ENCODE measurements at regions of chr12 and their contacts with region 1.

Region 1: GRCh38 chr12:56224102-56224701 is at the start of gene NABP2:
- H3K4me3 ChIP-seq: peak within 1 kb of the TSS; percentile 77
- H3K27ac ChIP-seq: peak within 1 kb of the TSS; percentile 64
- H3K4me1 ChIP-seq: peaks cover 12% of the 10 kb centered on the region; the same call in 1 of the 2 replicates
- CTCF ChIP-seq: peak; percentile 98

Region 2: GRCh38 chr12:56104109-56104814 is 119.9 kb before region 1 on chr12 and contains the start of gene PA2G4:
- CTCF ChIA-PET with region 1: interaction called, 8 read pairs
- POLR2A ChIA-PET with region 1: interaction called, 16 read pairs
- H3K4me3 ChIP-seq: peak within 1 kb of the TSS; percentile 82
- H3K27ac ChIP-seq: peak within 1 kb of the TSS; percentile 90
- H3K4me1 ChIP-seq: 0 out of 2 replicates have a peak, but pooled peaks cover 2% of the 10 kb centered on the region
- CTCF ChIP-seq: no peak; the same call in 1 of the 2 replicates

Region 3: DNA sequence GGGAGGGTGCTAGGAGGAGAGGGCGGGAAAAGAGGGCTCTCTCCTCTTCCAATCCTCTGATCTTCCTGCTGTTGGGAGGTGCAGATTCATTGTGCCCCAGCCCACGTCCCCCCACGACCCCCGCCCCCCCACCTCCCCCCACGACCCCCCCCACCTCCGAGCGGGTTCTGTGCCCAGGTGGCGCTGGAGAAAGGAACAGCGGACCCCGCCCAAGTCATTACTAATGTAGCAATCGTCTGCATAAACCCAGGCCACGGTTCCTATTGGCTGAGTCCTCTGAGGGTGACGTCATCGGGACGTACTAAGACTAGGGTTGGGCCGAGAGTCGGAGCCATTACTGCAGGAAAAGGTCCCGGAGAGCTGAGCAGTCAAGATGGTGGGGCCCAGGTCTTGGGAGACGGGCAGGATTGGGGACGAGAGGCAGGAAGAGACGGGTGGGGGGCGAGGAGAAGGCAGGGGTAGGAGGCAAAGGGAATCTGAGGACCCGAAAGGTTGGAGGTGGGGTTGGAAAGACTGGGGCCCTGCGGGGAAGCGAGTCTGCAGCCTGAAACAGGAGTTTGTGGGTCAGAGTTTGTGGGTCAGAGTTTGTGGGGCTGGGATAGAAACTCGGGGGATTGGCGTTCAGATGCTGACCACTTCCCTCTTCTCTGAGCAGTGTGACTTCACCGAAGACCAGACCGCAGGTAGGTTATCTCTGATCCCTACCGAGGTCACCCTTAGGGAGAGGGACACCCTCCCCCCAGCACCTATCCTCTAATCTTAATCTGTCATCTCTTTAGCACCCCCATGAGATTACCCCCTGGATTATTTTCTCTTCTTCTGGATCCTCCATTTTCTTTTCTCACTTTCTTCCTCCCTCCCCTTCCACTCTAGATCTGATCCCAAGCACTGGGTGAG is 65.9 kb before region 1 on chr12 and contains the start of gene MYL6:
- CTCF ChIA-PET with region 1: no interaction called
- POLR2A ChIA-PET with region 1: interaction called, 12 read pairs
- H3K4me3 ChIP-seq: peak within 1 kb of the TSS; percentile 90
- H3K27ac ChIP-seq: peak within 1 kb of the TSS; percentile 92
- H3K4me1 ChIP-seq: peaks cover 3% of the 10 kb centered on the region; the same call in 1 of the 2 replicates
- CTCF ChIP-seq: peak; percentile 30

Region 4: GRCh38 chr12:56206457-56207166 is 17.6 kb before region 1 on chr12:
- CTCF ChIA-PET with region 1: interaction called, 73 read pairs
- POLR2A ChIA-PET with region 1: interaction called, 47 read pairs
- H3K4me3 ChIP-seq: no peak overlapping the region
- H3K27ac ChIP-seq: no peak overlapping the region
- H3K4me1 ChIP-seq: no peaks in the 10 kb centered on the region
- CTCF ChIP-seq: peak; percentile 49

Region 5: DNA sequence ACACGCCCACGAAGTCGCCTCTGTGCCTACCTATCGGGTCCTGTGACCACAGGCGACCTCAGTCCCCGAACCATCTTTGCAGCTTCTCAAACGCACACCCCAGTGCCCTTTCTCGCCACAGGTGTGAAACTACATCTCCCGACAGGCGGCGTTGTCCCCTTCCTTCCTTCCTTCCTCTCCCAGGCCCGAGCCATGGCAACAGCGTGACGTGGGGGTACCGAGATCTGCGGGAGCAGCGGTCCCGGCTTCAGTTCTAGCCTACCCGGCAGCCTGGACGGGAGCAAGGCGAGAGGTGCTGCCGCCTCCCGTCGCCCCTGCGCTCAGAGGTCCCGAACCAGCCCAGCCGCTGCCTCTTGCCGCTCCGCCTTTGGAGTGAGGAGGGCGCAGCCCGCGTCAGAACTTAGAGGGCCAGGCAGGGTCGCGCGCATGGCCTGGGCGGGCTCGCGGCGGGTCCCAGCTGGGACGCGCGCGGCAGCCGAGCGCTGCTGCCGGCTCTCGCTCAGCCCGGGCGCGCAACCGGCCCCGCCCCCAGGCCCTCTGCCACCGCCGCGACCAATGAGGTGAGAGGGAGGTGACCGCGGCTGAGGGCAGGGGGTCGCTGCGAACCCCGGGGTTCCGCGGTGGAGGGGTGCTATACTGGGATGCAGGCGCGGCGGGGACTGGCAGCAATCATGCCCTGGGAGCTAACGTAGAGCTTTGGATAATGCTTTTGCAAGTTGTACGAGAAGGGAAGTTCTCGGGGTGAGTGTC is 42.7 kb after region 1 on chr12 and contains the start of gene COQ10A:
- CTCF ChIA-PET with region 1: interaction called, 4 read pairs
- POLR2A ChIA-PET with region 1: interaction called, 18 read pairs
- H3K4me3 ChIP-seq: peak within 1 kb of the TSS; percentile 65
- H3K27ac ChIP-seq: peak within 1 kb of the TSS; percentile 62; the same call in 1 of the 2 replicates
- H3K4me1 ChIP-seq: no peaks in the 10 kb centered on the region; the same call in 1 of the 2 replicates
- CTCF ChIP-seq: peak; percentile 98

Region 6: DNA sequence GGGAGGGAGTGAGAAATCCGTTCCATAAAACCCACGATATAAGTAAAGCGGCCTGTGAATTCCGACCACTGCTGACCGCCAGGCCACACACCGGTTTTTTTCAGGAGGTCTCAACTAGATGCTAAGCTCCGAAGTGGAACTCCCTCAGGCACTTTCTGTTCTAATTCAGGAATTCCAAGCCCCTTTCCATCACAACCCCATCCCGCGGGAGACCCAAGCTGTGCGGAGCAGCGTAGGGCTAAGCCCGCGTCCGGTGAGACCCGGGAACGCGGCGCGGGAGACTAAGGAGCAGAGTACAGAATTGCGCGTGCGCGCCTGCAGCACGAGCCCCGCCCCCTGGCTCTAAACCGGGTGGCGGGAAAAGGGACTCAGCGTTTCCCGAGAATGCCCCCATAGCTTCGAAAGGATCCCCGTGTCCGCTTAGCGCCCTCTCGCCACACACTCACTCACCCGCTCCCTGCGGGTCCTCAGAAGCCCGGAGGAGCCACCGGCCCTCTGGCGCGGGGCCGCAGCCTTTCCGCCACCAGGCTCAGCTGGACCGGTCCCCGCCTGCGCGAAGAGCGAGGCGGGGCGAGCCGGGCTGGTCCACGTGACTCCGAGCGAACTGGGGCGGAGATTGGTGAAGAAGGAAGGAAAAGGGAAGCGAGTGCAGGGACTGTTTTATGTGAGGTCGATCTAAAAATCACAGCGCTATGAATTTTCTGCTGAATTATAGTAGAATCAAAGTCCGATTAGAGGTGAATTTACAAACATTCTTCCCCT is 224.8 kb after region 1 on chr12 and contains the start of gene TIMELESS:
- CTCF ChIA-PET with region 1: no interaction called
- POLR2A ChIA-PET with region 1: interaction called, 10 read pairs
- H3K4me3 ChIP-seq: peak within 1 kb of the TSS; percentile 59
- H3K27ac ChIP-seq: peak within 1 kb of the TSS; percentile 93
- H3K4me1 ChIP-seq: peaks cover 5% of the 10 kb centered on the region
- CTCF ChIP-seq: peak; percentile 48; the same call in 1 of the 2 replicates